PC-3 (cell line): ENCODE measurements at regions of chr6 and their contacts with region 1.

Region 1: GRCh38 chr6:148608199-148608951 is 138.5 kb upstream of the UST start:
- DNase-seq: peak; percentile 42
- ATAC-seq: no peak
- H3K4me3 ChIP-seq: no peak overlapping the region
- H3K27ac ChIP-seq: no peak overlapping the region
- H3K4me1 ChIP-seq: no peaks in the 10 kb centered on the region
- H3K27me3 ChIP-seq: no peaks in the 10 kb centered on the region
- CTCF ChIP-seq: peak; percentile 67

Region 2: DNA sequence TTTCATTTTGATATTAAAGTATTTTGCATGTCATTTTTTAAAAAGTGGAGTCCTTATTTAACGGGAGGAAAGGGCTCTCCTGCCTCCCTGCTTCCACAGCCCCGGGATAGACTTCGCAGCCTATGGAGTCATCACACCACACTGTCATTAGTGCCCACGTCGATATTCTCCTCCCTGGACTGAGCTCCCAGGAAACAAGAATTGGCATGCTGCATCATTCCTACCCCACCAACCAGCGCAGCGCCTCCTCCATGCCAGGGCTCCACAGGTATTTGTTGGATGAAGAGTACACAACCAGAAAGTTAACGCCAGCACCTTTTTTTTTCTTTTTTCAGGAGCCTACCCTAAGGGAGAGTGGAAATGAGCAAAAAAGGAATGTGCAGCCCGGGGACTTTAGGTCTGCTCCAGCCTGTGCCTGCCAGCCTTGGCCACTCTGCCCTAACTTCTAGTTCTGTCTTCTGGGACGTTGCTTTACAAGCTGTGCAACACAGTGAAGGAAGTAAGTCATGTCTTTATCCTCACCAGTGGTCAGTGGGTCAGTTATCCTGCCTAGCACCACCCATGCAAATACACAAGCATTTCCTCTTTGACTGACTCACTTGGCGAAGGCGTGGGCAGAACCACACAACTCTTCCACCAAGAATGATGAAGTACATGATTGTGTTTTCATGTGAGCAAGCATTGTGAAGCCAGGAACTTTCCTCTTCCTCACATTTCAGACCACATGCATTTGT is 42.3 kb before region 1 on chr6:
- CTCF ChIA-PET with region 1: no interaction called
- POLR2A ChIA-PET with region 1: no interaction called
- intact Hi-C with region 1: loop called (anchors 5 kb)
- DNase-seq: peak; percentile 80
- ATAC-seq: peak; percentile 96
- H3K4me3 ChIP-seq: no peak overlapping the region
- H3K27ac ChIP-seq: peak overlapping the region; percentile 72
- H3K4me1 ChIP-seq: peaks cover 19% of the 10 kb centered on the region
- H3K27me3 ChIP-seq: no peaks in the 10 kb centered on the region
- CTCF ChIP-seq: no peak

Region 3: DNA sequence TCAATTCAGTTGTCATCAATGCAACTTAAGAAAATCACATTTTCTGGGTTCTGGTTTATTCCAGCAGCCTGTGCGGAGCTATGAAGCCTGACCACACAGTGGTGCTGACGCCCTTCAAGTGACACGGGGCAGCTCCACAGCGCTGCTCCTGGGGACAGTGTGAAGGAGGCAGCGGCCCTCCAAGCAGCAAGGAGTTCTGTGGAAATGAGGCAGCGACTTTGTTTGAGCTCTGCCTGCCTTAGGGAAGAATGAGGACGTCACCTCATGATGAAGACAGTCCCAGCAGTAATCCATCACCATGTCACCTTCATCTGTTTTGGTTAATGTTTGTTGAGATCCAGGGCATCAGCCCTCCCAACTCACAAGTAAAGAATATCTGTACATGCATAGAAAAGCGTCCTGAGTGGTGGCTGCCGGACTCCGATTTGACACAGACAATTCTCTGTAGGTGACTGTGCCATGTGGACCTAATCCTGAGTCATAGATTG is 30.1 kb before region 1 on chr6:
- CTCF ChIA-PET with region 1: no interaction called
- POLR2A ChIA-PET with region 1: no interaction called
- intact Hi-C with region 1: loop called (anchors 2 kb)
- DNase-seq: peak; percentile 80
- ATAC-seq: peak; percentile 100
- H3K4me3 ChIP-seq: peak overlapping the region; percentile 43; the same call in 1 of the 2 replicates
- H3K27ac ChIP-seq: no peak overlapping the region
- H3K4me1 ChIP-seq: peaks cover 12% of the 10 kb centered on the region; the same call in 1 of the 2 replicates
- H3K27me3 ChIP-seq: no peaks in the 10 kb centered on the region
- CTCF ChIP-seq: peak; percentile 95

Region 4: GRCh38 chr6:148649454-148649963 is 41.1 kb after region 1 on chr6:
- CTCF ChIA-PET with region 1: no interaction called
- POLR2A ChIA-PET with region 1: no interaction called
- intact Hi-C with region 1: no loop called
- DNase-seq: no peak
- ATAC-seq: no peak
- H3K4me3 ChIP-seq: no peak overlapping the region
- H3K27ac ChIP-seq: no peak overlapping the region
- H3K4me1 ChIP-seq: no peaks in the 10 kb centered on the region
- H3K27me3 ChIP-seq: no peaks in the 10 kb centered on the region
- CTCF ChIP-seq: no peak

Region 5: GRCh38 chr6:148700741-148701311 is 92.5 kb after region 1 on chr6:
- CTCF ChIA-PET with region 1: no interaction called
- POLR2A ChIA-PET with region 1: no interaction called
- intact Hi-C with region 1: loop called (anchors 10 kb)
- DNase-seq: peak; percentile 39
- ATAC-seq: peak; percentile 62
- H3K4me3 ChIP-seq: peak overlapping the region; percentile 81
- H3K27ac ChIP-seq: no peak overlapping the region
- H3K4me1 ChIP-seq: peaks cover 15% of the 10 kb centered on the region
- H3K27me3 ChIP-seq: no peaks in the 10 kb centered on the region
- CTCF ChIP-seq: no peak

Region 6: DNA sequence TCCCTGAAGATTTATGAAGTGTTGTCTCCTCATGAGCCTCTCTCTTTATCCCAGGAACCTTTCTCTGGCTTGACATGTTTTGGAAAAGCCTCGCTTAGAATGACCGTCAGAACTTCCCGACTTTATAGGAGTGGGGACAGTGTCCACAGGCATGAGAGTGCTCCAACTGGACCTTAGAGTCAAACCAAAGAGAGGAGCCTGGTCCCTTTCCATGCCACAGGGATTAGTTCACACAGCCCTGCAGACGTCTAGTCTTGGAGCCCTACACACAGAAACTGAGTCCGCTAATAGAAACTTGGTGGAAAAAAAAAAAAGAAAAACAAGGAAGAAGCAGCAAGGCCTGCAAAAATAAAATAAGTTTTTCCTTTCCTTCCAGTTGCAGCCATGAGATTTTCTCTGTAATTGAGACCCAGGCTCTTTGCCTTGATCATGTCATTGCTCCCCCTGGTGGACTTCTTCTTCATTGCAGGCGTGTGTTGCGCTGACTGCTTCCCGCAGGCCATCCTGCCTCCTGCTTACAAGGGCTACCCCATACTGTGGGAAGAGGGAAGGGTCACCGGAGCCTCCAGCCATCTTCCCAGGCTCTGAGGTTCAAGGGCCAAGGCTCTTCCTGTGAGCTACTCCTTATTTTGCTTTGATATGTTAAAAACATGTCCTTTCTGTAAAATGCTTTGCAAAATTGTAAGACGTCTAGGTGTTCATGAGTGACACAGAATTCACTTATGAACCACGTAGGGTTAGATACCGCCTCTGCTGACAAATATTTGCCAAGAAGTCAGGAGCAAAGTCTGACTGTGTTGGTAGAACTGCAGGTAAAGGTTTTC is 339.5 kb after region 1 on chr6:
- CTCF ChIA-PET with region 1: no interaction called
- POLR2A ChIA-PET with region 1: no interaction called
- intact Hi-C with region 1: loop called (anchors 1 kb)
- DNase-seq: peak; percentile 86
- ATAC-seq: peak; percentile 88
- H3K4me3 ChIP-seq: no peak overlapping the region
- H3K27ac ChIP-seq: no peak overlapping the region
- H3K4me1 ChIP-seq: peaks cover 16% of the 10 kb centered on the region
- H3K27me3 ChIP-seq: no peaks in the 10 kb centered on the region
- CTCF ChIP-seq: peak; percentile 74

Region 7: DNA sequence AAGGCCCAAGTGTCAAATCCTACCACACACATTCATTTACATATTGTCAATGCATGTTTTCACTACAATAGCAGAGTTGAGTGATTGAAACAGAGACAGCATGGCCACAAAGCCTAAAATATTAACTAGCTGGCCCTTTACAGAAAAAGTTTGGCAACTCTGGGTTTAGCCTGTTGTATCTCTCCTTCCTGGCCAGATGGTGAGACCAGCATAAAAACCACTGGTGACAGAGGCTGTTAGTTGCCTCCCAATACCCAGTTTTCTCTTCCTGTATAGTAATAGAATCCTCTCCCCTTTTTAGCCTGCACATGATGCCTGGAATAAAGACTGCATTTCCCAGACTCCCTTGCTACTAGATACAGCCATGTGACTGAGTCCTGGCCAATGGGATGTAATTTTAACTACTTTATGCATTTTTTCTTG is 609.1 kb after region 1 on chr6:
- CTCF ChIA-PET with region 1: no interaction called
- POLR2A ChIA-PET with region 1: no interaction called
- intact Hi-C with region 1: no loop called
- DNase-seq: no peak
- ATAC-seq: no peak
- H3K4me3 ChIP-seq: no peak overlapping the region
- H3K27ac ChIP-seq: no peak overlapping the region
- H3K4me1 ChIP-seq: no peaks in the 10 kb centered on the region
- H3K27me3 ChIP-seq: no peaks in the 10 kb centered on the region
- CTCF ChIP-seq: no peak